Activated CD8-positive, alpha-beta memory T cell treated with anti-CD3 and anti-CD28 coated beads, Interleukin-2, amount 10 ng/mL, durations not matched to agents 7 days and 5 days (primary cell): ENCODE measurements at regions of chr7 and their contacts with region 1.

Region 1: GRCh38 chr7:101363734-101364374 is 1.2 kb downstream of the COL26A1 start:
- DNase-seq: peak; percentile 69
- ATAC-seq: peak; percentile 94
- H3K4me3 Mint-ChIP-seq: no peak overlapping the region
- H3K27ac Mint-ChIP-seq: no peak overlapping the region
- H3K4me1 Mint-ChIP-seq: peaks cover 6% of the 10 kb centered on the region
- H3K27me3 Mint-ChIP-seq: peaks cover 45% of the 10 kb centered on the region

Region 2: DNA sequence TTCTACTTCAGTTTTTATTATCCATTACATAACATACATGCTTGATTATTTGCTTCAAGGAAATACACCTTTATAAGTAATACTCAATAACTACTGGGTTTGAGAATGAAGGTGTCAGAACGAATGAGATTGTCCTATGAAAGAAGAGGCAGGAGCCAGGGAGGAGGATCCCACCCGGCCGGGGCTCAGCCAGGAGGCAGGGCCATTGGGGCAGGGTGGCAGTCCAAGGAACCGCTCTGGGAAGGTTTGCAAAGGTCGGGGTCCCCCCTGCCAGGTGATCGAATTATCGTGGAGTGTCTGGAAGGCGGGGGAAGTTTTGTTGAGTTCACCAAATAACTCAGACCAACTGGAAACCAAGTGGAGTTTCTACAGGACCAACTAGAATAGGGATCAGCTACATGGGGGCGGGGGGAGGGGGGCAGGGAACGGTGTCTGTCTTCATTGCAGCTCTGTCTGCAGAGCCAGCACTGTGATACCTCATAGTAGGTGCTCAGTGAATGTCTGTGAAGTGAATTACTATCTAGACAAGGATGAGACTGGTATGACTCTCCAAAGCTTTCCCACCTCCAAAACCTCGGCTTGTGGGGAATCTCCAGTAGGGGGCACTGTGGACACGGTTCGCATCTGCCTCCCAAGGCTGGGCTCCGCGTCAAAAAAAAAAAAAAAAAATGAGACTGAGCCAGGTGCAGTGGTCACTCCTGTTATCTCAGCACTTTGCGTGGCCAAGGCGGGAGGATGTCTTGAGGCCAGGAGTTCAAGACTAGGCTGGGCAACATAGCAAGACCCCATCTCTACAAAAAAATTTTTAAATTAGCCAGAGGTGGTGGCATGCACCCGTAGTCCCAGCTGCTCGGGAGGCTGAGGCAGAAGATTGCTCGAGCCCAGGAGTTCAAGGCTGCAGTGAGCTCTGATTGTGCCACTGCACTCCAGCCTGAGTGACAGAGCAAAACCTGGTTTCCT is 269.2 kb before region 1 on chr7:
- CTCF ChIA-PET with region 1: no interaction called
- DNase-seq: no peak
- ATAC-seq: peak; percentile 30
- H3K4me3 Mint-ChIP-seq: no peak overlapping the region
- H3K27ac Mint-ChIP-seq: no peak overlapping the region
- H3K4me1 Mint-ChIP-seq: peaks cover 14% of the 10 kb centered on the region
- H3K27me3 Mint-ChIP-seq: peaks cover 4% of the 10 kb centered on the region

Region 3: DNA sequence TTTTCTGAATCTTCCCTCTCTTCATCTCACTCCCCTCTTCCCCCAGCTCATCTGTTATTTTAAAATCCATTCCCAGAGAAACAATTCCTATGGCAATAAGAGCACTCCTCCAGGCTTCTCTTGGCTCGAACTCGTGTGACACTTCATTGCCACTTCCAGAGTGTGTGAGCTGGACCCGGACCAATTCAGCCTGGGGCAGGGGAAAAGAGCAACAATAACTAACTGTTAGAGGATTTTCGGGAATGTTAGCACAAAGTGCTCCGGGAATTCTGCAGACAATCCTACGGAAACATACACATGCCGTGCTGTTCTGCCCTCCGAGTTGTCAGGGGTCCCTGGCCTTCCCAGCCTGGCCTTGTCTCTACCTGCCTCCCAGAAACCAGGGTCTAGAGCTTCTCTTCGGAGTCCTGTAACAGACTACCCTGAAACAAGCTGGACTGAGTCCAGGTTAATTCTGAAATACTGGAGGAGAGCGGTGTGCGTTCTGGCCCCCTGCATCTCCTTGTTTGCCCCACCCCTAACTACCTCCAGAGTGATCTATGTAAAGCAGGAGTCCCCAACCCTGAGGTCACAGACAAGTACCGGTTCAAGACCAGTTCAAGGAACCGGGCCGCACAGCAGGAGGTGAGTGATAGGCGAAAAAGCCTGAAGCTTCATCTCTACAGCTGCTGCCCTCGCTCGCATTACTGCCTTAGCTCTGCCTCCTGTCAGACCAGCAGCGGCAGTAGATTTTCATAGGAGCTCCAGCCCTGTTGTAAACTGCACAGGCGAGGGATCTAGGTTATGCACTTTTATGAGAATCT is 10.2 kb after region 1 on chr7:
- CTCF ChIA-PET with region 1: interaction called, 10 read pairs
- DNase-seq: no peak
- ATAC-seq: no peak
- H3K4me3 Mint-ChIP-seq: no peak overlapping the region
- H3K27ac Mint-ChIP-seq: no peak overlapping the region
- H3K4me1 Mint-ChIP-seq: peaks cover 4% of the 10 kb centered on the region
- H3K27me3 Mint-ChIP-seq: peaks cover 26% of the 10 kb centered on the region

Region 4: GRCh38 chr7:101390901-101391301 is 27.0 kb after region 1 on chr7:
- CTCF ChIA-PET with region 1: interaction called, 10 read pairs
- DNase-seq: peak; percentile 81
- ATAC-seq: peak; percentile 88
- H3K4me3 Mint-ChIP-seq: no peak overlapping the region
- H3K27ac Mint-ChIP-seq: peak overlapping the region; percentile 71
- H3K4me1 Mint-ChIP-seq: peaks cover 25% of the 10 kb centered on the region
- H3K27me3 Mint-ChIP-seq: peaks cover 20% of the 10 kb centered on the region

Region 5: DNA sequence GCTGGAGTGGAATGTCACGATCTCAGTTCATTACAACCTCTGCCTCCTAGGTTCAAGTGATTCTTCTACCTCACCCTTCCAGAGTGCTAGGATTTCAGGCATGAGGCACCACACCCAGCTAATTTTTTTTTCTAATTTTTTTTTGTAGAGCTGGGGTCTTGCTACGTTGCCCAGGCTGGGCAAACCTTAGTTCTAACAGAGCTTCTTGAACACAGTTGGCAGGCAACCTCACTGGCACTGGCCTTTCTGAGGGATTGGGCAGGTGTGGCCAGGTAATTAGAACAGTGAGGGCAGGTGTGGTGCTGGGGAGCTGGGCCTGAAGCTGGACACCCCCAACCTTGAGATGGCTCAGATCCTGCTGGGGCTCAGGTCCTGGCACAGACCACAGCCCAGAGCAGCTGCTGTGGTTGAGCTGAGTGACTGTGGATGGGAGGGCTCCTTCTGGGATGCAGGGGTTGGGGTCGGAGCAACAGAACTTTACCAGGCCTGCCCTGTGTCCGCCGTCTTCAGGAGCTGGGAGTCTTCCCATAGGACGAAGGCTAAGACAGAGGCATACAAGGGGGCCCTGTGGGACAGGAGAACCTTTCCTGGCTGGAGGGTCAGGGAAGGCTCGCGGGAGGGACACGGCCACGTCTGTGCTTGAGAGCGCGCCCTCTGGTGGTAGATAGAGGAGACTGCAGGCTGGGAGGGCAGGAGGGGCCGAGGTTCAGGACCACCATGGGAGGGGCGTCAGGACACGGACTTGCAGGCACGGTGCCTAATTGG is 47.1 kb after region 1 on chr7:
- CTCF ChIA-PET with region 1: interaction called, 23 read pairs
- DNase-seq: peak; percentile 47
- ATAC-seq: peak; percentile 60
- H3K4me3 Mint-ChIP-seq: no peak overlapping the region
- H3K27ac Mint-ChIP-seq: no peak overlapping the region
- H3K4me1 Mint-ChIP-seq: peaks cover 11% of the 10 kb centered on the region
- H3K27me3 Mint-ChIP-seq: peaks cover 6% of the 10 kb centered on the region

Region 6: GRCh38 chr7:101436857-101437576 is 73.2 kb after region 1 on chr7:
- CTCF ChIA-PET with region 1: interaction called, 32 read pairs
- DNase-seq: no peak
- ATAC-seq: no peak
- H3K4me3 Mint-ChIP-seq: no peak overlapping the region
- H3K27ac Mint-ChIP-seq: no peak overlapping the region
- H3K4me1 Mint-ChIP-seq: no peaks in the 10 kb centered on the region
- H3K27me3 Mint-ChIP-seq: peaks cover 8% of the 10 kb centered on the region

Region 7: DNA sequence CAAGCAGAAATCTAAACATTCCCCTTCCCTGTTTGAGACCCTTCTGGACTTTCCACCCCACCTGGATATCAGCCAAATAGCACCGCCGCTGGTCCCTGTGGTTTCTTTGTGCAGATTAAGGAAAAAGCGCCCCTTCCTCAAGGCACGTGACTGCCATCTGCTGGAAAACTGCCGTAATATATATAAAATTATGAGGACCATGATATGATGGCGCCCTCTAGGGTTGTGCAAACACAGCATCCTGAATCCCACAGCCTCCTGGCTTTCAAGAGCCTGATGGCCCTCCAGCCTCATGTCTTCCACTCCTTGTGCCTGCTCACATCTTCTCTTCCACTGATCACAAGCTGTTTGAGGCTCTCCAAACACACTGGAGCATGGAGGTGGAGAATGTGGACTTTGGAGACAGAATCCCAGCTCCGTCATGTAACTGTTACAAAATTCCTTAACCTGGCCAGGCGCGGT is 144.0 kb after region 1 on chr7:
- CTCF ChIA-PET with region 1: interaction called, 11 read pairs
- DNase-seq: peak; percentile 56
- ATAC-seq: peak; percentile 32
- H3K4me3 Mint-ChIP-seq: no peak overlapping the region
- H3K27ac Mint-ChIP-seq: no peak overlapping the region
- H3K4me1 Mint-ChIP-seq: peaks cover 23% of the 10 kb centered on the region
- H3K27me3 Mint-ChIP-seq: peaks cover 7% of the 10 kb centered on the region